ENCODE measurements at regions of chr14 and their contacts with region 1.

Region 1: DNA sequence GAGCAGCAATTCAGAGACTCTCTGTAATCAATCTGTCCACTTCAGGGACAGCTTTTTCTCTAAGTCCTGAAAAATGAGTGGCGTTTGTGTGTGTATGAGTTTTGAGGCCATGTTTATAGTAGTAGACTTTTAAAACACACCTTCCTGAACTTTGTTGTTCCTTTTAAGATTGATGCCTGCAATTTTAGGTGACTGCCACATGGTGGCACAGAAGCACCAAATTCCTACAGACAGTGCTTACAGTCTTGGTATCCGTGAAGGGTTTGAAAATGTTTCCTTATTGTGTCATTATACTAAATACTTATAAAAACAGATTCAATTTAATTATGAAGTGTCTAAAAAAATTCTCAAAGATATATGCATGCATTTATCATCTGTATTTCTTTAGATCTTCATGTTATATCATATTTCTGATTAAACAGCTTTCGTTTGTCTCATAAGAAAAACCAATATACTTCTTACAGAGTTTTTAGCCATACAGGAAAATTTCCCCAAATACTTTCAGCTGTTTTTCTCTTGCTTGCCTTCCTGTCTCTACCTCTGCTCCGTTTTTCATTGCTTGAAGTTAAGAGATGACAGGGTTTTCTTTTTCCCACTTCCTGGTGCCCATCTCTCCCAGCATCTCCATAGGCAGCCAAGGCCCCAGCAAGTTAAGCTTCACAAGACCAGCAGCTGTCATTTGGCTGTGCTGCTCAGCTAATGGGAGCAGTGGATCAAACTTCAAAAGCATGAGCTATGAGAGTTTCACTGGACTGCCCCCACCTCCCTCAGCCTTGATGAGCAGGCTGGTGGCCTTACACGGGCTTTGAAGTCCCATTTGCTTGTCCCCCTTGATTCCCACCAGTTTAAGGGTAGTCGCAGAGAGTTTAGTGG is 259.6 kb downstream of the AKAP6 start:
- DNase-seq: peak; percentile 41
- H3K4me3 ChIP-seq: no peak overlapping the region
- CTCF ChIP-seq: peak; percentile 71

Region 2: DNA sequence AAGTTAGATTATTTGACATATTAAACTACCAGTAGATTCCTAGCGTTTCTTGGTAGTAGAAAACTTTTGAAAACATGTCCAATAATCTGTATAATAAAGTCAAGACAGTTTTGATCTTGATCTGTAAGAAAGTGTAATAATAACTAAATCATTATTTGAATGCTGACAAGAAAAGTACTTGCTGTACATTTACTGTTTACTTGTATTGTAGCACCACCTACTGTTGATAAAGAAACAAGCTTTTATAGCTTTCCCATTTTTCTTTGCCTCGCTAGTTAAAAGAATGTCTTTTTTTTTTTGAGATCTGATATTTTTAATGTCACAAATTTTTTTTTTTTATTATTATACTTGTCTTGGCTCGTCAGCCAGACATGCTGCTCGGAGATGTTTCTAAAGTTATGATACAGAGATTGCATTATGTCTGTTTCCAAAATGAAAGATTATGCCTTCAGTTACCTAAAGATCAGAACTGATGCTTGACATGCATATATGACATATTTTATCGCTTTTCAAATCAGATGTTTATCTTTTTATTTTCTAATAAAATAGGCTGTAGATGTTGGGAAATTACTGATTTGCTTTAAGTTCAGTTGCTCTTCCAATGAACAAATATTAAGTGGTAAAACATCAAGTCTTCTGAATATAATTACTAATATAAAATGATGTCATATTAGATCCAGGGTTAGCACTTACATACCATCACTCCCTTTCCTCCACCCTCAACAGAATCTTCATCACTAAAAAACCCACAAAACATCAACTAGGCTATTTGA is 119.1 kb before region 1 on chr14:
- in situ Hi-C with region 1: no loop called
- DNase-seq: peak; percentile 42
- H3K4me3 ChIP-seq: no peak overlapping the region
- CTCF ChIP-seq: peak; percentile 21

Region 3: GRCh38 chr14:32913719-32914118 is 325.0 kb after region 1 on chr14:
- in situ Hi-C with region 1: loop called (anchors 10 kb)
- DNase-seq: no peak
- H3K4me3 ChIP-seq: no peak overlapping the region
- CTCF ChIP-seq: peak; percentile 62

Region 4: DNA sequence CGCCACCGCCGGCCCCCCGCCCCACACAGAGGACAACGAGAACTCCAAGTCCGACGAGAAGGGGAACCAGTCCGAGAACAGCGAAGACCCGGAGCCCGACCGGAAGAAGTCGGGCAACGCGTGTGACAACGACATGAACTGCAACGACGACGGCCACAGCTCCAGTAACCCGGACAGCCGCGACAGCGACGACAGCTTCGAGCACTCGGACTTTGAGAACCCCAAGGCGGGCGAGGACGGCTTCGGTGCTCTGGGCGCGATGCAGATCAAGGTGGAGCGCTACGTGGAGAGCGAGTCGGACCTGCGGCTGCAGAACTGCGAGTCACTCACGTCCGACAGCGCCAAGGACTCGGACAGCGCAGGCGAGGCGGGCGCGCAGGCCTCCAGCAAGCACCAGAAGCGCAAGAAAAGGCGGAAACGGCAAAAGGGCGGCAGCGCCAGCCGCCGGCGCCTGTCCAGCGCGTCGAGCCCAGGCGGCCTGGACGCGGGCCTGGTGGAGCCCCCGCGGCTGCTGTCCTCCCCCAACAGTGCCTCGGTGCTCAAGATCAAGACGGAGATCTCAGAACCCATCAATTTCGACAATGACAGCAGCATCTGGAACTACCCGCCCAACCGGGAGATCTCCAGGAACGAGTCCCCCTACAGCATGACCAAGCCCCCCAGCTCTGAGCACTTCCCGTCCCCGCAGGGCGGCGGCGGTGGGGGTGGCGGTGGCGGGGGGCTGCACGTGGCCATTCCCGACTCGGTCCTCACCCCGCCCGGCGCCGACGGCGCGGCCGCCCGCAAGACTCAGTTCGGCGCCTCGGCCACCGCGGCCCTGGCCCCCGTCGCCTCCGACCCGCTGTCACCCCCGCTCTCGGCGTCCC is 1211.3 kb after region 1 on chr14:
- in situ Hi-C with region 1: loop called (anchors 5 kb)
- DNase-seq: no peak
- H3K4me3 ChIP-seq: no peak overlapping the region
- CTCF ChIP-seq: no peak